ENCODE measurements at regions of chr4 and their contacts with region 1.

Region 1: DNA sequence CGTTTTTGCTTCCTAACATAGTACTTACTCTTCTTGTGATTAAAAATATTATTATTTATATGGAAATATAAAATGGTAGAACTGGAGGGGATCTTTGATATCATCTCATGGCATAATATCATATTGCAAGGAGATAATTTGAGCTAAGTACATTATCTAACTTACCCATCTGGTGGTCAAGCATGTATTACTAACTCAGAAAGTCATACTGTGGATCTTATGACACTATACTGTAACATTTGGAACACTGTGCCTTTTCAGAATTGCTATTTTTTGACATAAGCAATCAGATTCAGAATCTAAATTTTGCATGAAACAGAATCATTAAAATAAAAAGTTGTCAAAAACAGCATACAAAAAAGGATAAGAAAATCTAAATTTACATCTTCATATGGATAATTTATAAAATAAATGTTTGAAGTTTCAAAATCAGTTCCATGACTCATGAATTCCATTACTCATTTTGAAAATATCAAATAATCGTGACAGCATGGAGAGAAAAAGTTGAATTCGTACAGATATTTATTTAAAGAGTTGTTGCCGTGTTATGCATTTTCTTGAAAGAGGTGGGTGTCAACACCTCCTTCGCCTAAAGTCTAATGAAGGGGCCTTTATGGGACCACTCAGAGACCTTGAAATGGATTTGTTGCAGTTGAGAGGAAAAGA is 928.1 kb downstream of the PDHA2 start:
- DNase-seq: no peak
- ATAC-seq: no peak
- H3K4me3 Mint-ChIP-seq: no peak overlapping the region
- H3K27ac Mint-ChIP-seq: no peak overlapping the region
- H3K4me1 Mint-ChIP-seq: no peaks in the 10 kb centered on the region
- H3K27me3 Mint-ChIP-seq: no peaks in the 10 kb centered on the region

Region 2: GRCh38 chr4:95889662-95890061 is 878.3 kb before region 1 on chr4:
- CTCF ChIA-PET with region 1: no interaction called
- POLR2A ChIA-PET with region 1: no interaction called
- intact Hi-C with region 1: no loop called
- DNase-seq: no peak
- ATAC-seq: no peak
- H3K4me3 Mint-ChIP-seq: no peak overlapping the region
- H3K27ac Mint-ChIP-seq: no peak overlapping the region
- H3K4me1 Mint-ChIP-seq: no peaks in the 10 kb centered on the region
- H3K27me3 Mint-ChIP-seq: no peaks in the 10 kb centered on the region

Region 3: DNA sequence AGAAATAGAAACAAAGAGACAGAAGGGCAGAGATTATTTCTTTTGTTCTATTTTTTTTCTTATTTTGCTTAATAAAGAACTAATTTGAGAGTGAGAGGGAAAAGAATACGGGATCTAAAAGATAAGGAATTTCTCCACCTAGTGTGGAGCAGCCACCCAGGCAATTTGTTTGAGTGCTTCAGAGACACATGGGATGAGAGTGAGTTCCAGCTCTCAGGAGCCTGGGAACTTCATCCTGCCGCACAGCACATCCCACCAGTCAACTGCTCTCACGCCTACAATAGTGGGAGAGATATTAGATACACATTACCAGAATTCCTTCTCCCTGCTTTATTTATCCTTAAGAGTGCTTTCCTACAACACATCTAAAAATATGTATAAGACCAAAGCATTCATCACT is 18.4 kb after region 1 on chr4:
- CTCF ChIA-PET with region 1: no interaction called
- POLR2A ChIA-PET with region 1: no interaction called
- intact Hi-C with region 1: no loop called
- DNase-seq: no peak
- ATAC-seq: no peak
- H3K4me3 Mint-ChIP-seq: no peak overlapping the region
- H3K27ac Mint-ChIP-seq: no peak overlapping the region
- H3K4me1 Mint-ChIP-seq: no peaks in the 10 kb centered on the region
- H3K27me3 Mint-ChIP-seq: no peaks in the 10 kb centered on the region

Region 4: GRCh38 chr4:96833831-96834230 is 65.9 kb after region 1 on chr4:
- CTCF ChIA-PET with region 1: no interaction called
- POLR2A ChIA-PET with region 1: no interaction called
- intact Hi-C with region 1: loop called in 1 of 2 experiments (anchors 2 kb)
- DNase-seq: no peak
- ATAC-seq: no peak
- H3K4me3 Mint-ChIP-seq: no peak overlapping the region
- H3K27ac Mint-ChIP-seq: no peak overlapping the region
- H3K4me1 Mint-ChIP-seq: no peaks in the 10 kb centered on the region
- H3K27me3 Mint-ChIP-seq: no peaks in the 10 kb centered on the region